ENCODE measurements at regions of chr6 and their contacts with region 1.

Region 1: GRCh38 chr6:127879685-127880084 is 21.2 kb downstream of the THEMIS start:
- DNase-seq: peak in 3 of 14 experiments; percentile 10 to 55 (median 36)
- ATAC-seq: peak; percentile 31
- H3K4me3 ChIP-seq: no peak overlapping the region
- H3K4me3 Mint-ChIP-seq: peak overlapping the region; percentile 69
- H3K27ac ChIP-seq: no peak overlapping the region
- H3K27ac Mint-ChIP-seq: peak overlapping the region; percentile 74
- H3K4me1 ChIP-seq: peaks cover 10% of the 10 kb centered on the region
- H3K4me1 Mint-ChIP-seq: peaks cover 89% of the 10 kb centered on the region
- H3K27me3 ChIP-seq: no peaks in the 10 kb centered on the region
- H3K27me3 Mint-ChIP-seq: no peaks in the 10 kb centered on the region
- CTCF ChIP-seq: no peak

Region 2: GRCh38 chr6:127115084-127115655 is 764.5 kb before region 1 on chr6:
- CTCF ChIA-PET with region 1: no interaction called
- POLR2A ChIA-PET with region 1: no interaction called
- intact Hi-C with region 1: no loop called
- DNase-seq: no peak
- ATAC-seq: no peak
- H3K4me3 ChIP-seq: no peak overlapping the region
- H3K4me3 Mint-ChIP-seq: no peak overlapping the region
- H3K27ac ChIP-seq: no peak overlapping the region
- H3K27ac Mint-ChIP-seq: no peak overlapping the region
- H3K4me1 ChIP-seq: peaks cover 18% of the 10 kb centered on the region
- H3K4me1 Mint-ChIP-seq: peaks cover 20% of the 10 kb centered on the region
- H3K27me3 ChIP-seq: peaks cover 24 to 33% of the 10 kb centered on the region in 2 experiments
- H3K27me3 Mint-ChIP-seq: peaks cover 73% of the 10 kb centered on the region
- CTCF ChIP-seq: no peak

Region 3: GRCh38 chr6:127833336-127833735 is 46.3 kb before region 1 on chr6:
- CTCF ChIA-PET with region 1: no interaction called
- POLR2A ChIA-PET with region 1: no interaction called
- intact Hi-C with region 1: no loop called
- DNase-seq: no peak
- ATAC-seq: no peak
- H3K4me3 ChIP-seq: no peak overlapping the region
- H3K4me3 Mint-ChIP-seq: no peak overlapping the region
- H3K27ac ChIP-seq: no peak overlapping the region
- H3K27ac Mint-ChIP-seq: peak overlapping the region; percentile 55
- H3K4me1 ChIP-seq: no peaks in the 10 kb centered on the region
- H3K4me1 Mint-ChIP-seq: peaks cover 64% of the 10 kb centered on the region
- H3K27me3 ChIP-seq: no peaks in the 10 kb centered on the region
- H3K27me3 Mint-ChIP-seq: no peaks in the 10 kb centered on the region
- CTCF ChIP-seq: no peak

Region 4: GRCh38 chr6:127893541-127893940 is 13.9 kb after region 1 on chr6:
- CTCF ChIA-PET with region 1: no interaction called
- POLR2A ChIA-PET with region 1: interaction called, 3 read pairs
- intact Hi-C with region 1: loop called in 1 of 2 experiments (anchors 1 kb)
- DNase-seq: peak in 3 of 14 experiments; percentile 45 to 48 (median 46)
- ATAC-seq: peak; percentile 43
- H3K4me3 ChIP-seq: peak overlapping the region; percentile 37
- H3K4me3 Mint-ChIP-seq: peak overlapping the region; percentile 74
- H3K27ac ChIP-seq: peak overlapping the region; percentile 9 to 26
- H3K27ac Mint-ChIP-seq: peak overlapping the region; percentile 91
- H3K4me1 ChIP-seq: peaks cover 14% of the 10 kb centered on the region
- H3K4me1 Mint-ChIP-seq: peaks cover 66% of the 10 kb centered on the region
- H3K27me3 ChIP-seq: no peaks in the 10 kb centered on the region
- H3K27me3 Mint-ChIP-seq: no peaks in the 10 kb centered on the region
- CTCF ChIP-seq: no peak

Region 5: GRCh38 chr6:127900935-127901334 is 21.2 kb after region 1 on chr6 and contains the start of gene THEMIS:
- CTCF ChIA-PET with region 1: no interaction called
- POLR2A ChIA-PET with region 1: interaction called, 8 read pairs
- intact Hi-C with region 1: loop called in 1 of 2 experiments (anchors 2 kb)
- DNase-seq: peak in 13 of 14 experiments; percentile 22 to 89 (median 44)
- ATAC-seq: peak; percentile 75
- H3K4me3 ChIP-seq: peak within 1 kb of the TSS; percentile 71
- H3K4me3 Mint-ChIP-seq: peak within 1 kb of the TSS; percentile 98
- H3K27ac ChIP-seq: peak within 1 kb of the TSS; percentile 48 to 61
- H3K27ac Mint-ChIP-seq: peak within 1 kb of the TSS; percentile 91
- H3K4me1 ChIP-seq: peaks cover 13% of the 10 kb centered on the region
- H3K4me1 Mint-ChIP-seq: peaks cover 72% of the 10 kb centered on the region
- H3K27me3 ChIP-seq: no peaks in the 10 kb centered on the region
- H3K27me3 Mint-ChIP-seq: no peaks in the 10 kb centered on the region
- CTCF ChIP-seq: no peak
- total RNA-seq, gene THEMIS: 25.0 to 25.3 TPM